GM13977 (cell line): ENCODE measurements at regions of chr10 and their contacts with region 1.

Region 1: GRCh38 chr10:117216611-117217195 is 19.4 kb downstream of the KCNK18 start:
- DNase-seq: peak; percentile 90
- CTCF ChIP-seq: peak; percentile 100

Region 2: GRCh38 chr10:117442944-117443685 is 226.4 kb after region 1 on chr10:
- in situ Hi-C with region 1: loop called (anchors 25 kb)
- DNase-seq: peak; percentile 75
- CTCF ChIP-seq: peak; percentile 84